ENCODE measurements at regions of chr6 and their contacts with region 1.

Region 1: GRCh38 chr6:71533939-71534379 is 245.3 kb downstream of the OGFRL1 start:
- DNase-seq: no peak
- ATAC-seq: no peak

Region 2: DNA sequence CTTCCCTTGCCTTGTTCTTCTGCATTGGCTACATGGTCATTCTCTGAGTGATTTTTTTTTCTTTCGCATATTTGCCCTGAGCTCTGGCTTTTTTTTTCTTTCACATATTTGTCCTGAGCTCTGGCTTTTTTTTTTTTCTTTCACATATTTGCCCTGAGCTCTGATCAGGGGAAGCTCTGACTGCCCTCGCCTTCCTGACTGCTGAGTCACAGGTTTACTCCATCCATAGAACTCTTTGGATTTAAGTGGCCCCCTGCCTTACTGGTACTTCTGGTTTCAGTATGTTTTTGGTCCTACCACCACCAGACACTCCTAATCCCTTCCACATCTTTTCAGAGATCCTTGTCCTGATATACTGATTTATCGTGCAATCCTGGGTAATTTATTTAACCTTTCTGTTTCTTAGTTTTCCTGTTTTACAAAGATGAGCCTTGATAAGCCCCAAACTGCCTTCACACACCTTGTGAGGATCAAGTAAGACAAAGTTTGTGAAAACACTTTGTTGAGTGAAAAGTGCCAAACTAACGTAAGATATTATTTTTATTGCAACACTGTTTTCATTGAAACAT is 44.1 kb before region 1 on chr6:
- intact Hi-C with region 1: no loop called
- DNase-seq: no peak
- ATAC-seq: no peak

Region 3: DNA sequence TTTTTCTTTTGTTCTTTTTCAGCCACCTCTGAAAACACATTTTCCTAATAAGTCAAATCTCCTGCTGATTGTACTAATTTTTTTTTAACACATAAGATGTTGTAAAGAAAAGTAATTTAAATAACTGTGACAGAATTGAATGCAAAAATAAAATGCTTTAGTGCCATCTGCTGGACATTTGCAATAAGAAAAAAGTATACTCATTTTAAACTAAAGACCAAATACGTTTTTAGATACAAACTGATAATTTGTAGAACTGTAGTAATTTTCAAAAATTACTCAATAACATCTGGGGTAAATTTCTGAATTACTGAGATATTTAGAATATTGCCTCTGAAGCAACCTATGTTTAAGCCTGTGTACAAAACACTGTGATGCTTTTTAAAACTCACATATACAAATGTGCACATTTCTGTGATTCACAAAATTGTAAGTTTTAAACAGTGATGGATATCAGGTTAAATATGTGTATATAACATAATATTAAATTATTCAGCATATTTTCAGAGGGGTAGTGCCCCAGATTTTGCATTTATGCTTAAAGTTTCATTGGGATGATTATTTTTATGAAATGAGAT is 551.1 kb after region 1 on chr6:
- intact Hi-C with region 1: loop called (anchors 5 kb)
- DNase-seq: no peak
- ATAC-seq: no peak

Measured in Right ventricle myocardium superior (tissue), 1 donor.